K562 (cell line): ENCODE measurements at regions of chr11 and their contacts with region 1.

Region 1: DNA sequence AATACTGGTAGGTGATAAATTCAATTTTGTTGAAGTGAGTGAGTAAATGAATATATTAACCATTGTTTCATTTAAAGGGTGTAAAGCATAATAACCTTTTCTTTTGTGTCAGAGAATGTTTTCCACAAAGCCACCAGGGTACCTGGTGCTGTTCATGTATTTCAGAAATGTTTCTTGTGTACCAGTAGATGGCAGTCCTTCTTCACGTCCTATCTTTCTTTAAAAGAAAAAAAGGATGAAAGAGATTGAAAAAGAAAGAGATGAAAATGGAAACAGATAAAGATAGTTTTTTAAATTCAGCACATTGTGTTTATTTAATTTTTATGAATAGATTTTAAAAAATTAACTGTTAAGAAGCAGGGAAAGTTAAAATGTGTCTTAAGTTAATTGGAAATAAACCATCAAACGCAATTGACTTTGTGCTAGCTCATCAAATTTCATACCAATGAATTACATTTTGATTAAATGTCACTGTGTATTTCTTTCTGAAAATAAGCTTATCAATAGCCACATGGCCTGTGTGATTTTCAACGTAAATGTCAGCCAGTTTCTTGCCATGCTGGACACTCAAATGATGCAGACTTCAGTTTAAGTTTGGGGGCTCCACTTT is 65.5 kb upstream of the CHORDC1 start:
- DNase-seq: peak; percentile 19 to 30 (median 22)
- ATAC-seq: peak; percentile 62; the same call in 2 of the 3 replicates
- H3K4me3 ChIP-seq: no peak overlapping the region
- H3K27ac ChIP-seq: no peak overlapping the region
- H3K4me1 ChIP-seq: no peaks in the 10 kb centered on the region
- H3K27me3 ChIP-seq: no peaks in the 10 kb centered on the region
- CTCF ChIP-seq: peak; percentile 38 to 66 (median 64); a peak in 5 of 6 replicates
- EP300 ChIP-seq: no peak
- POLR2A ChIP-seq: no peak
- RAD21 ChIP-seq: peak; percentile 42 to 61; a peak in 3 of 4 replicates

Region 2: GRCh38 chr11:90453525-90453924 is 165.2 kb after region 1 on chr11:
- CTCF ChIA-PET with region 1: no interaction called
- POLR2A ChIA-PET with region 1: no interaction called
- in situ Hi-C with region 1: no loop called
- intact Hi-C with region 1: loop called (anchors 10 kb)
- DNase-seq: no peak
- ATAC-seq: no peak
- H3K4me3 ChIP-seq: no peak overlapping the region
- H3K27ac ChIP-seq: no peak overlapping the region
- H3K4me1 ChIP-seq: no peaks in the 10 kb centered on the region
- H3K27me3 ChIP-seq: no peaks in the 10 kb centered on the region
- CTCF ChIP-seq: no peak
- EP300 ChIP-seq: no peak
- POLR2A ChIP-seq: no peak
- RAD21 ChIP-seq: no peak

Region 3: DNA sequence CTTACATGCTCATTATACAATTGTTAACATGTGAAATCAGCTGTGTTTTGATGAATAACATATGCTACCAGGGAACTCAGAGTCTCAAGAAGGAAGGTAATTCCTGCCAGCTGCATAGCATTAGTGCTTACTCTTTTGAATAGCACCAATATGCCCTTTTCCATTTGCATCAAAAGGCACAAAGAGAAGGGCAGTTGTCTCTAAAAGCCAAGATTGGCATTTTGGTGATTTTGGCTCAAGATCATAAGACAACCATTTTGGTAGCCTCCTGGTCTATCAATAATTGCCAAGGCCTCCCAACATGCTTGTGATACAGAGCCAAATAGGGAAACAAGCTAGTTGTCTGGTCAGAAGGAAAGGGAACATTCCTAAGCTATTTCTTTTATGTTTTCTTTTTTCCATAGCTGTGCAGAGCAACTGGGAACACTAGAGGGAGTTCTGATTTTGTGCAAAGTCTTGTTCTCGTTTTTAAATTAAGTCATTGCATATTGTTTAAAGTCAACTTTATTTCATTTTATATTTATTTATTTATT is 351.2 kb after region 1 on chr11:
- CTCF ChIA-PET with region 1: no interaction called
- POLR2A ChIA-PET with region 1: no interaction called
- in situ Hi-C with region 1: no loop called
- intact Hi-C with region 1: no loop called
- DNase-seq: no peak
- ATAC-seq: no peak
- H3K4me3 ChIP-seq: no peak overlapping the region
- H3K27ac ChIP-seq: no peak overlapping the region
- H3K4me1 ChIP-seq: no peaks in the 10 kb centered on the region
- H3K27me3 ChIP-seq: no peaks in the 10 kb centered on the region
- CTCF ChIP-seq: no peak
- EP300 ChIP-seq: no peak
- POLR2A ChIP-seq: no peak
- RAD21 ChIP-seq: no peak

Region 4: GRCh38 chr11:91248199-91248807 is 960.0 kb after region 1 on chr11:
- CTCF ChIA-PET with region 1: no interaction called
- POLR2A ChIA-PET with region 1: no interaction called
- in situ Hi-C with region 1: no loop called
- intact Hi-C with region 1: loop called (anchors 2 kb)
- DNase-seq: peak in 3 of 4 experiments; percentile 4 to 25 (median 9)
- ATAC-seq: no peak
- H3K4me3 ChIP-seq: no peak overlapping the region
- H3K27ac ChIP-seq: no peak overlapping the region
- H3K4me1 ChIP-seq: no peaks in the 10 kb centered on the region
- H3K27me3 ChIP-seq: no peaks in the 10 kb centered on the region
- CTCF ChIP-seq: peak; percentile 8 to 52 (median 37); a peak in 3 of 6 replicates
- EP300 ChIP-seq: no peak
- POLR2A ChIP-seq: no peak
- RAD21 ChIP-seq: peak; percentile 37 to 54